ENCODE measurements at regions of chr17 and their contacts with region 1.

Region 1: DNA sequence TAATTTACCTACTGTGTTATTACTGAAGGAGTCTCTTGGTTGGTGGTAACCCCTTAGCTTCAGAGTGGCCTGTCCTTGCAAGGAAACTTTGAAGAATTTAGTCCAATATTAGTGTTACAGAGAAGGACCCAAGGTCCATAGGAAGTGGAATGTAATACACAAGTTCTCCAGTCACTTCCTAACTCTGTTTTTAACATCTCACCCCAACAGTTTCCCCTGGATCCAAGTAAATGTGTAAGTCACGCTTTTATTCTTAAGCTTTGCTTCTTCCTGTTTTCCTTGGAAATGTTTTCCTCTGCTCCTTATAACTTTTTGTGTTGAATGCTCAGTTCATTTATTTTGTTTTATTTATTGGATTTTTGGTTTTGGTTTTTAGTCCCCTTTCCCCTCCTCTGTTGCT is 25.9 kb upstream of the RPRML start:
- DNase-seq: no peak
- ATAC-seq: no peak
- H3K4me3 ChIP-seq: no peak overlapping the region
- H3K4me1 ChIP-seq: no peaks in the 10 kb centered on the region
- CTCF ChIP-seq: no peak

Region 2: DNA sequence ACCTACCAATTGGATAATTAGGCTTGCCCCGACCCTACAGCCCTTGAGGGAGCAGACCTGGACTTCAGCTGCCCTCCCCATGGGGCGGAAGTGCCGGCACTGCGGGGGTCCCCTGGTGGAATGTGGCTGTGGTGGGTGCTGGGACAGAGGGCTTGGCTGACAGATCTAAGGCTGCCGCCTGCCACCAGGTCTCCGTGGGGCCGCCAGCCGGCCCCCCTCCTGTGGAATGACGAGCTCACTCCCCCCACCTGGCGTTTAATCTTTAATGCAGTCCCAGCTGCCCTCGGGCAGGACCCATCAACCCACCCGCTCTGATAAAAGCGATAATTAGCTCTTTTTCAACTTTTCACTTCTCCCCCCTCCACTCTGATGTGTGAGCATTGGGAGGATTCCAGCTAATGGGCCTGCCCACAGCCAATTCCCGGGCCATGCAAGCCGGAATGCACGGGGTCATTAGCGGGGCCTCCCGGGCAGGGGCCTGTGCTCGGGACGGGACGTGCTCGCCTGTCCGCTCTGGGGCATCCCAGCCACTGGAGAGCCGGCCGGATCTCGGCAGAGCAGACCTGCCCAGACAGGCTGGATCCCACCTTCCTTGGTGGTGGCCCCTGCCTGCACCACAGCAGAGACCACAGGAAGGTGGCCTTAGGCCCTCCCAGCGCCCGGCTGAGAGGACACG is 110.3 kb before region 1 on chr17:
- intact Hi-C with region 1: no loop called
- DNase-seq: no peak
- ATAC-seq: no peak
- H3K4me3 ChIP-seq: no peak overlapping the region
- H3K4me1 ChIP-seq: no peaks in the 10 kb centered on the region
- CTCF ChIP-seq: no peak

Region 3: DNA sequence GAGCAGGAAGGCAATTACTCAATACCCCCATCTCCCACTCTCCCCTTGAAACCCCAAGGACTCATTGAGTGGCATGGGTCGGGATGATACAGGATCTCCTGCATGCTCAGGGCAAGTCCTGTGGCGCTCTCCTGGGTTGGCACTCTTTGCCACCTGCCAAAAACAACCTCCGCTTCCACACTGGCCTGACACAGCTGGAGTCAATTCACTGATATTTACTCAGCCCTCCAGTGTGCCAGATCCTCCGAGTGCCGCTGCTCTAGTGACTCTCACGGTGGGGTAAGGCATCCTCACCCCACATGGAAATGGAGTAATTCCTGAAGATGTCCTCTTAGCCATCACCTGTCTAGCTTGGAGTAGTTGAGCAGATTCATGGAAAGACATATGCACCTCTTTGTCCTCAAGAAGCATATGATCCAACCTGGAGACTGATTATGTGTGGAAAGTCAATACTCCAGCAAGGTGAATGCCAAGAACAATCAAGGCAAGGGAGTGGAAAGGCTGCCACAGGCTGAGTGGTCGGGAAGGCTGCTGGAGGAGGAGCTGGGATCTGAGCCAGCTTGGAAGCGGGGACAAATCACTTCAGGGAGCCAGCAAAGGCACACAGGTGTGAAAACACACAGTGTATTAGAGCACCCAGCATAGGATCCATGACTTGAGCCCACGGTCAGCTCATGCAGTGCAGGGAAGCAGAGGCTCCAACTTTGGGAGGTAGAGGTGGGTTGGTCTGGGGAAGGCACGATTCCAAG is 94.6 kb before region 1 on chr17:
- intact Hi-C with region 1: no loop called
- DNase-seq: no peak
- ATAC-seq: no peak
- H3K4me3 ChIP-seq: no peak overlapping the region
- H3K4me1 ChIP-seq: no peaks in the 10 kb centered on the region
- CTCF ChIP-seq: no peak

Region 4: DNA sequence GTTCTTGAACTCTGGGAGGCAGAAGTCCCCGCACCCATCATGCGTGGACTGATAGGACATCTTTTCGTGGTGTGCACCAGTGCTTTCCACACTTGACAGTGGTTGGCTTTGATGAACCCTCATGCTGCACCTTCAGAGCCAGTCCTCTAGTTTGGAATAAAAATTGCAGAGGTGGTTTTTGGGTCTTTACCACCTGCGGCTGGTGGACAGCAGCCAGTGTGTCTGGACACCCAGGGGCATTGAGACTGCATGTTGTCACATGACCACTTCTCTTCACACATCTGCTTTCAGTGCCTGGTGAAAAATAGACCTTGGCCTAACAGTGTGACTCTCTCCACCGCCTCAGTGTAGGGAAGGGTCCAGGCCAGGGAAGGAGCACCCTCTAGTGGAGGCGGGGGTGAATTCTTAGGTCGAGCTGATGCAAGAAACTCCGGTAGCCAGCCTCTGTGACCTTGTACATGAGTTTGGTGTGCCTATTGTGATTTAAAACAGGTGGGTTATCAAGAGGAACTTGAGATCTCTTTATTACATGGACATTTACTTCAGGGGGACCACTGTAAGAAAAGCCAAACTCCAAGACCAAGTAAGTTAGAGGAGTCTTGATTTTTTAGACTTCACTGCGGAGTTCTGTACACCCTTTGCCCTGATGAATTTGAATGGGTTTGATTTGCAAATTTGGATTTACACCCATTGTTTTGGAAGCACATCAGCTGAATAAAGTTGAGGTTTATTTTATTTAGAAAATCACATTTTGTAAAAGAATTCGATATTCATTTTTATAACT is 64.1 kb before region 1 on chr17:
- intact Hi-C with region 1: loop called in 1 of 2 experiments (anchors 5 kb)
- DNase-seq: peak; percentile 53 to 85 (median 74)
- ATAC-seq: peak; percentile 79
- H3K4me3 ChIP-seq: no peak overlapping the region
- H3K4me1 ChIP-seq: no peaks in the 10 kb centered on the region
- CTCF ChIP-seq: peak; percentile 63

Measured in mucosa of descending colon (tissue), 3 donors.